ENCODE measurements at regions of chr9 and their contacts with region 1.

Region 1: GRCh38 chr9:18208154-18209059 is 265.5 kb upstream of the ADAMTSL1 start:
- DNase-seq: no peak
- ATAC-seq: no peak

Region 2: GRCh38 chr9:18149471-18150011 is 58.9 kb before region 1 on chr9:
- intact Hi-C with region 1: loop called (anchors 5 kb)
- DNase-seq: no peak
- ATAC-seq: no peak